ENCODE measurements at regions of chr2 and their contacts with region 1.

Region 1: DNA sequence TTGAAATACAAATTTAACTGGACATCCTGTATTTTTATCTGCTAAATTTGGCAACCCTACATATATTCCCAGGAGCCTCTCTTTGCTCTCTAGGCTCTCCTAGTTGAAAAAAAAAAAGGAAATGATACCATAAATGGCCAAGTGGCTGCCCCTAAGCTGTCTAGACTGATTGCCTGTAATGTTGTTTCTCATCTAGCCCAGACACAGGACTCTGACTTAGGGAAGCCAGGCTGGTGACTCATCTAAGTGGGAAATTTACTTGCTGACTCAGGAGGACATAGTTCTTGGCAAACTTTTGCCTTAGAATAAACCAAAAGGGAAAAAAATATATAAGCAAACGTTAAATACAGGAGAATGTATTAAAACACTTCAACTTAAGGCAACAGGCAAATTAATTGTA is 14.6 kb upstream of the ITGAV start:
- DNase-seq: peak; percentile 98
- H3K4me3 ChIP-seq: no peak overlapping the region
- H3K27ac ChIP-seq: peak overlapping the region; percentile 82
- H3K4me1 ChIP-seq: peaks cover 24% of the 10 kb centered on the region
- H3K27me3 ChIP-seq: no peaks in the 10 kb centered on the region
- CTCF ChIP-seq: no peak
- POLR2A ChIP-seq: no peak

Region 2: DNA sequence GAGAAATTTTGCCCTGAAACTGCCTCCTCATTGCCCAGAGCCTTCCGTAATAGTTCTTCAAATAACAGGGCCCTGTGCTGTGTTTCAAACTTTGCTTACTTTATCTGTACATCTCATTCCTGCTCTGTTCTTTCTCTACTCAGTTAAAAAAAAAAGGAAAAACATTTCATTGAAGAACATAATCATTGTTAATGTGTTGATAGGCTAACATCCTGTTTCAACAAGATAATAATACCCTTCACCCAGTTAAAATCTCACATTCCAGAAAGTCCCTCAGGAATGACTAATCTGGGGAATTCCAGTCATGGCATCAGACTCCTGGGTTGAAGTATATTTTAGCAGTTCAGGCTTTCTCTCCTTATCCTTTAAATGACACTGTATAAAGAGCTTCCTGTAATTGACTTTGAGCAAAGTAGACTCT is 31.0 kb before region 1 on chr2:
- CTCF ChIA-PET with region 1: interaction called, 6 read pairs
- POLR2A ChIA-PET with region 1: no interaction called
- dilution Hi-C with region 1: no loop called
- intact Hi-C with region 1: loop called (anchors 1 kb)
- DNase-seq: peak; percentile 98
- H3K4me3 ChIP-seq: peak overlapping the region in 1 of 3 experiments; percentile 15
- H3K27ac ChIP-seq: peak overlapping the region; percentile 98
- H3K4me1 ChIP-seq: peaks cover 35% of the 10 kb centered on the region
- H3K27me3 ChIP-seq: no peaks in the 10 kb centered on the region
- CTCF ChIP-seq: no peak
- POLR2A ChIP-seq: peak; percentile 31

Region 3: GRCh38 chr2:186664385-186665043 is 89.2 kb after region 1 on chr2:
- CTCF ChIA-PET with region 1: no interaction called
- POLR2A ChIA-PET with region 1: no interaction called
- dilution Hi-C with region 1: no loop called
- intact Hi-C with region 1: no loop called
- DNase-seq: no peak
- H3K4me3 ChIP-seq: no peak overlapping the region
- H3K27ac ChIP-seq: no peak overlapping the region
- H3K4me1 ChIP-seq: no peaks in the 10 kb centered on the region
- H3K27me3 ChIP-seq: no peaks in the 10 kb centered on the region
- CTCF ChIP-seq: no peak
- POLR2A ChIP-seq: no peak

Measured in endothelial cell of umbilical vein (primary cell).